ENCODE measurements at regions of chr1 and their contacts with region 1.

Region 1: GRCh38 chr1:20212685-20213331 is 26.5 kb upstream of the PLA2G2C start:
- DNase-seq: peak; percentile 77
- H3K4me3 Mint-ChIP-seq: no peak overlapping the region
- H3K27ac Mint-ChIP-seq: no peak overlapping the region
- H3K4me1 Mint-ChIP-seq: peaks cover 26% of the 10 kb centered on the region
- H3K27me3 Mint-ChIP-seq: no peaks in the 10 kb centered on the region
- CTCF ChIP-seq: peak; percentile 13

Region 2: DNA sequence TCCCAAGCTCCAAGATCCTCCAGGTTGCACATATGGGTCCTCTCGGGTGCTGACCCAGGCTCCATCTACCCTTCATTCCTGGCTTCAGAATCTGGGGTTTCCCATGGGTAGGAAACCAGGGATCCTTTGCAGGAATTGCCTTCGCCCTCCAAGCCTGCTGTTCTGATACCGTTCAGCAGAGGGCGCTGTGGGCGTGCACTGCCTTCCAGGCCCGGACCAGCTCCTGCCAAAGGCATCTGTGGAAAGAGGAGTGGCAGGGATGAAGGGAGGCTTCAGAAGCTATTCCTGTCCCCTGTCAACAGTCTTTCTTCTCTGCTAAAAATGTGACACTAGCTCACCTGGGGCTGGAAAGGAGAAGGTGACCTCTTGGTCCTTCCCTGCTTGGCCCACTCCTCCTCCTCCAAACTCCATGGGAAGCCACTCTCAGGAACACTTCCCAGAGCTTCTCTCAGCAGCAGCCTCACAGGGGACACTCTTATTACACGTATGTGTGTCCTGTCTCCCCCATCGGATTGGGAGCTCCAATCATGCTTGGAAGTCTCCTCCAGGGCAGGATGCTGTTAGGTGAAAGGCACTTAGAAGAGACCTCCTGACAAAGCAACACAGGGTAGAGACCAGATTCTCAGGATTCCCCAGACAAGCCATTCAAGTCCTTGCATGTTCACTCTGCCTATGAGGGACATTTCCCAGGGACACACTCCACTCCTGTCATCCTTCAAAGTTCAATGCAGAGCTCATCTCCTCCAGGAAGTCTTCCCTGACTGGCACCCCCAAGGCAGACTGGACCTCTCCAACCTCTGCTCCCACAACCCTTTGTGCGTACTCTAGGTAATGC is 149.2 kb after region 1 on chr1:
- CTCF ChIA-PET with region 1: interaction called, 14 read pairs
- intact Hi-C with region 1: loop called (anchors 5 kb)
- DNase-seq: peak; percentile 71
- H3K4me3 Mint-ChIP-seq: no peak overlapping the region
- H3K27ac Mint-ChIP-seq: no peak overlapping the region
- H3K4me1 Mint-ChIP-seq: peaks cover 20% of the 10 kb centered on the region
- H3K27me3 Mint-ChIP-seq: peaks cover 33% of the 10 kb centered on the region
- CTCF ChIP-seq: peak; percentile 86

Region 3: GRCh38 chr1:20430355-20431175 is 217.8 kb after region 1 on chr1:
- CTCF ChIA-PET with region 1: interaction called, 10 read pairs
- intact Hi-C with region 1: loop called (anchors 10 kb)
- DNase-seq: peak; percentile 47
- H3K4me3 Mint-ChIP-seq: no peak overlapping the region
- H3K27ac Mint-ChIP-seq: no peak overlapping the region
- H3K4me1 Mint-ChIP-seq: no peaks in the 10 kb centered on the region
- H3K27me3 Mint-ChIP-seq: peaks cover 9% of the 10 kb centered on the region
- CTCF ChIP-seq: peak; percentile 78

Region 4: DNA sequence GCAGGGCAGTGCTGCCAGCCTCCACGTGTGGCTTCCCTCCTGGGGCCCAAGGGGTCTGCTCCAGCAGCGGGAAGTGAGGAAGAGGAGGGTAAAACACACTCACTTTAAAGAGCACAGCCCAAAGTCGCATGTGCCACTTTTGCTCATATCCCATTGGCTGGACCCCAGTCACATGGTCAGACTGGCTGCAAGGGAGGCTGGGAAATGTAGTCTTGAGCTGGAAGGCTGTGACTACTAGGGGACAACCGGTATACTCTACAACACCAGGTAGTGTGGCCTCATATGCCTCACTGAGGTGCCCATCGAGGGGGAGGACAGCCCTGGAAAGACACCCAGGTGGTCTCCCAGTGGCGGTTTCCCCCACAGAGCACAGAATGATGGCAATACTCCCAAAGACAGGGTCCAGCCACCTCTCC is 228.0 kb after region 1 on chr1:
- CTCF ChIA-PET with region 1: interaction called, 11 read pairs
- intact Hi-C with region 1: no loop called
- DNase-seq: peak; percentile 64
- H3K4me3 Mint-ChIP-seq: no peak overlapping the region
- H3K27ac Mint-ChIP-seq: no peak overlapping the region
- H3K4me1 Mint-ChIP-seq: peaks cover 7% of the 10 kb centered on the region
- H3K27me3 Mint-ChIP-seq: no peaks in the 10 kb centered on the region
- CTCF ChIP-seq: no peak

Region 5: GRCh38 chr1:20493839-20494608 is 281.2 kb after region 1 on chr1:
- CTCF ChIA-PET with region 1: interaction called, 7 read pairs
- intact Hi-C with region 1: loop called (anchors 2 kb)
- DNase-seq: peak; percentile 82
- H3K4me3 Mint-ChIP-seq: no peak overlapping the region
- H3K27ac Mint-ChIP-seq: peak overlapping the region; percentile 94
- H3K4me1 Mint-ChIP-seq: peaks cover 26% of the 10 kb centered on the region
- H3K27me3 Mint-ChIP-seq: no peaks in the 10 kb centered on the region
- CTCF ChIP-seq: peak; percentile 85